ENCODE measurements at regions of chr11 and their contacts with region 1.

Region 1: DNA sequence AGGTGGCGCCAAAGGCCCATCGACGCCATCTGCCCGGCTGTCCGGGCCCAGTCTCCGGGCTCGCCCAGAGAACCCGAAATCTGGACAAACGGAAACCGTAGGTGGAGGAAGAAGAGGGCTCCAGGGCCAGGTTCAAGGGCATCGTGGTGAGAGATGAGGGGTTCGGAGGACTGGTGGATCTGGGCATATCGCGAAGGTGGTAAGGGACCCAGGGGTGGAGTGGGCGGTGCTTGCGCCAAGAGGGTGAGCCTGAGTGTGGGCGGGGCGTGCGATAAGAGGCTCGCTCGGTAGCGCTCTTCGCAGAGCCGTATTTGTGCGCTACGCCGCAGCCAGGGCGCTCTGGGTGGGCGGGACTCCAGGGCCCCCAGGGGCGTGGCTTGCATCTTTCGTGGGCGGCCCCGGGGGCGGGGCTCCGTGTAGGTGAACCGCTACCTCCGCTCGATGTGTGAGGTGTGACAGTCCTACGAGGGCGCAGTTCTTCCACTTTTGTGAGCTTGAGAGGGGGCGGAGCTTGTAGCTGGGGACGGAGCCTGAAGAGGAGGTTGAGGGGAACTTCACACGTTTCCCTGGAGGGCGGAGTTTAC is 4.8 kb downstream of the CD248 start:
- DNase-seq: peak; percentile 93 to 98
- ATAC-seq: peak; percentile 83 to 89
- H3K4me3 ChIP-seq: peak overlapping the region; percentile 42
- H3K27ac ChIP-seq: peak overlapping the region; percentile 76 to 88
- H3K4me1 ChIP-seq: peaks cover 13% of the 10 kb centered on the region
- CTCF ChIP-seq: peak; percentile 98
- EP300 ChIP-seq: no peak
- POLR2A ChIP-seq: no peak
- RAD21 ChIP-seq: peak; percentile 96 to 99

Region 2: GRCh38 chr11:66288671-66289547 is 23.1 kb before region 1 on chr11 and contains the start of gene YIF1A:
- CTCF ChIA-PET with region 1: interaction called, 116 read pairs
- POLR2A ChIA-PET with region 1: interaction called, 10 read pairs
- DNase-seq: peak; percentile 99 to 100
- ATAC-seq: peak; percentile 78 to 94
- H3K4me3 ChIP-seq: peak within 1 kb of the TSS; percentile 86
- H3K27ac ChIP-seq: peak within 1 kb of the TSS; percentile 94 to 96
- H3K4me1 ChIP-seq: peaks cover 20% of the 10 kb centered on the region
- CTCF ChIP-seq: no peak
- EP300 ChIP-seq: no peak
- POLR2A ChIP-seq: peak; percentile 92
- RAD21 ChIP-seq: no peak
- polyA plus RNA-seq, gene YIF1A: 99.7 and 132 TPM in 2 replicates

Region 3: GRCh38 chr11:66336234-66337102 is 24.4 kb after region 1 on chr11 and contains the start of gene RIN1:
- CTCF ChIA-PET with region 1: interaction called, 247 read pairs
- POLR2A ChIA-PET with region 1: interaction called, 42 read pairs
- DNase-seq: peak; percentile 86 to 93
- ATAC-seq: peak; percentile 74 to 86
- H3K4me3 ChIP-seq: peak within 1 kb of the TSS; percentile 56
- H3K27ac ChIP-seq: peak within 1 kb of the TSS; percentile 83 to 97
- H3K4me1 ChIP-seq: peaks cover 26% of the 10 kb centered on the region
- CTCF ChIP-seq: peak; percentile 53
- EP300 ChIP-seq: no peak
- POLR2A ChIP-seq: peak; percentile 34
- RAD21 ChIP-seq: peak; percentile 63 to 74; a peak in 4 of 5 replicates
- polyA plus RNA-seq, gene RIN1: 2.0 and 2.3 TPM in 2 replicates

Region 4: GRCh38 chr11:66363805-66364535 is 51.9 kb after region 1 on chr11:
- CTCF ChIA-PET with region 1: interaction called, 13 read pairs
- POLR2A ChIA-PET with region 1: no interaction called
- DNase-seq: peak; percentile 59 to 64
- ATAC-seq: peak; percentile 44 to 75; a peak in 4 of 6 replicates
- H3K4me3 ChIP-seq: no peak overlapping the region
- H3K27ac ChIP-seq: no peak overlapping the region
- H3K4me1 ChIP-seq: no peaks in the 10 kb centered on the region
- CTCF ChIP-seq: peak; percentile 58
- EP300 ChIP-seq: no peak
- POLR2A ChIP-seq: no peak
- RAD21 ChIP-seq: no peak

Region 5: DNA sequence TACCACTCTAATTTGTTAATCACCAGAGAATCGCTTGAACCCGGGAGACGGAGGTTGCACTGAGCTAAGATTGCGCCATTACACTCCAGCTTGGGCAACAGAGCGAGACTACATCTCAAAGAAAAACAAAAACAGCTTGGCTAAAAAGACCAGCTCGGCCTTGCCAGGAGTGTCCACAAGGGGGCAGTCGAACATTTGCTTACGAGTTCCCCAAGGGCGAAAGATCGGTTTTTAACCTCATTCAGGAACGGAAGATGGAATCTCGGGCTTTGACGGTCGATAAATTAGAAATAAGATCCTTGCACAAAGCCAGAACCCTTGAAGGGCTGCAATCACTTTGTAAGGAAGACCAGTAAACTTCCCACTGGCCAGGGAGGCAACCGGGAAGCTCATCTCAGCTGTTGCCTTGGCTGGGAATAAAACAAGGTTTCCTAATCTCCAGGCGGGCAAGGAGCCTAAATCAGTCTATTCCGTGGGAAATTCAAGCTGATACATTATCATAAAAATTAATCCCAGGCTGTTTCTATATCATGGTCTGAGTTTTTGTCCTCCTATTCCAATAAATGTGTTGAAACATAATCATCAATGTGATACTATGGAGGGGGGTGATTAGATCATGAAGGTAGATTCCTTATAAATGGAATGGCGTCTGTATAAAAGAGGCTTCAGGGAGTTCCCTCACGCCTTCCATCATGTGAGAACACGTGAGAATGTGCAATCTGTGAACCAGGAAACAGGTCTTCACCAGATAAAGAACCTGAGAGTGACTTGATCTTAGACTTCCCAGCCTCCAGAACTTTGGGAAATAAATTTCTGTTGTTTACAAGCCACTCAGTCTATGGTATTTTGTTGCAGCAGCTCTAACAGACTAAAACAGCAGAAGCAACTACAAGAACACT is 74.4 kb after region 1 on chr11:
- CTCF ChIA-PET with region 1: interaction called, 38 read pairs
- POLR2A ChIA-PET with region 1: interaction called, 3 read pairs
- DNase-seq: peak; percentile 41 to 89
- ATAC-seq: peak; percentile 72 to 84
- H3K4me3 ChIP-seq: peak overlapping the region; percentile 27; the same call in 2 of the 3 replicates
- H3K27ac ChIP-seq: peak overlapping the region in 1 of 2 experiments; percentile 44; a peak in 2 of 6 replicates
- H3K4me1 ChIP-seq: 0 out of 3 replicates have a peak, but pooled peaks cover 3% of the 10 kb centered on the region
- CTCF ChIP-seq: peak; percentile 93
- EP300 ChIP-seq: no peak
- POLR2A ChIP-seq: no peak
- RAD21 ChIP-seq: peak; percentile 65 to 76; a peak in 4 of 5 replicates